Heart right ventricle (tissue), 16 donors: ENCODE measurements at regions of chr16 and their contacts with region 1.

Region 1: GRCh38 chr16:72182976-72183375 is 11.0 kb upstream of the PMFBP1 start:
- DNase-seq: no peak
- ATAC-seq: no peak
- H3K4me3 ChIP-seq: no peak overlapping the region
- H3K27ac ChIP-seq: no peak overlapping the region
- H3K4me1 ChIP-seq: no peaks in the 10 kb centered on the region
- H3K27me3 ChIP-seq: peaks cover 0 to 17% (median 0%) of the 10 kb centered on the region in 7 donors
- CTCF ChIP-seq: no peak

Region 2: GRCh38 chr16:72120026-72120425 is 63.0 kb before region 1 on chr16:
- intact Hi-C with region 1: no loop called
- DNase-seq: no peak
- ATAC-seq: no peak
- H3K4me3 ChIP-seq: no peak overlapping the region
- H3K27ac ChIP-seq: no peak overlapping the region
- H3K4me1 ChIP-seq: peaks cover 0 to 7% (median 0%) of the 10 kb centered on the region in 9 donors
- H3K27me3 ChIP-seq: no peaks in the 10 kb centered on the region
- CTCF ChIP-seq: no peak

Region 3: DNA sequence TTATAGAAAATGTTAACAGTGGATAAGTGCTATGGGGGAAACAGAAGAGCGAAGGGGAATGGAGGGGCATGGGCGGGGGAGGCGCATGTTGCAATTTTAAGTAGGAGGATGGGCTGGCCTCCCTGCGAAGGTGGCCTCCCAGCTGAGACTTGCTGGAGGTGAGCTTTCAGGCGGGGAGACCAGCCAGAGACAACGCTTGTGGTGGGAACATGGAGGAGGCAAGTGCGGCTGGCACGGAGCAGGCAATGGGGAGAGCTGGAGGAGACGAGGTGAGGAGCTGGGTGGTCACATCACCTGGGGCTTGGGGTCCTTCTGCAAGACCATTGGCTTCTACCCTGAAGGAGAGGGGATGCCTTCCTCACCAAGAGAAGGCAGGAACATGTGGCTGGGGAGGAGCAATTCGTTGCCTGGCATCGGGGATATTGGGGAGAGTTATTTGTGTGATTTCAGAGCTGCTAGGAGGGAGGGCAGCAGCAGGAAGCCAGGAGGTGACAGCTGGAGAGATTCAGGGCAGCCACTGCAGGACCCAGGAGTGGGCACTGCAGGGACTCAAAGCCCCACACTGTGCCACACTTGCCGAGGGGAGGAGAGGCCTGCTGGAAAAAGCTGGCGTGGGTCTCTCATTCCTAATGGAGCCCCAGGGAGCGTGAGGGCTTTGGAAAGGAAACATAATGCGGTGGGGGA is 45.5 kb before region 1 on chr16:
- intact Hi-C with region 1: loop called in 1 of 10 experiments (anchors 5 kb)
- DNase-seq: no peak
- ATAC-seq: no peak
- H3K4me3 ChIP-seq: no peak overlapping the region
- H3K27ac ChIP-seq: no peak overlapping the region
- H3K4me1 ChIP-seq: no peaks in the 10 kb centered on the region
- H3K27me3 ChIP-seq: peaks cover 0 to 13% (median 0%) of the 10 kb centered on the region in 7 donors
- CTCF ChIP-seq: no peak

Region 4: GRCh38 chr16:72234387-72234786 is 51.4 kb after region 1 on chr16:
- intact Hi-C with region 1: no loop called
- DNase-seq: no peak
- ATAC-seq: no peak
- H3K4me3 ChIP-seq: no peak overlapping the region
- H3K27ac ChIP-seq: no peak overlapping the region
- H3K4me1 ChIP-seq: no peaks in the 10 kb centered on the region
- H3K27me3 ChIP-seq: no peaks in the 10 kb centered on the region
- CTCF ChIP-seq: no peak